Heart right ventricle (tissue), 16 donors: ENCODE measurements at regions of chr11 and their contacts with region 1.

Region 1: GRCh38 chr11:127345819-127346459 is 345.4 kb upstream of the KIRREL3 start:
- DNase-seq: peak in 1 of 2 donors; percentile 14
- ATAC-seq: no peak
- H3K4me3 ChIP-seq: no peak overlapping the region
- H3K27ac ChIP-seq: no peak overlapping the region
- H3K4me1 ChIP-seq: no peaks in the 10 kb centered on the region
- H3K27me3 ChIP-seq: peaks cover 0 to 10% (median 0%) of the 10 kb centered on the region in 7 donors
- CTCF ChIP-seq: peak; percentile 57 to 85 (median 70)

Region 2: DNA sequence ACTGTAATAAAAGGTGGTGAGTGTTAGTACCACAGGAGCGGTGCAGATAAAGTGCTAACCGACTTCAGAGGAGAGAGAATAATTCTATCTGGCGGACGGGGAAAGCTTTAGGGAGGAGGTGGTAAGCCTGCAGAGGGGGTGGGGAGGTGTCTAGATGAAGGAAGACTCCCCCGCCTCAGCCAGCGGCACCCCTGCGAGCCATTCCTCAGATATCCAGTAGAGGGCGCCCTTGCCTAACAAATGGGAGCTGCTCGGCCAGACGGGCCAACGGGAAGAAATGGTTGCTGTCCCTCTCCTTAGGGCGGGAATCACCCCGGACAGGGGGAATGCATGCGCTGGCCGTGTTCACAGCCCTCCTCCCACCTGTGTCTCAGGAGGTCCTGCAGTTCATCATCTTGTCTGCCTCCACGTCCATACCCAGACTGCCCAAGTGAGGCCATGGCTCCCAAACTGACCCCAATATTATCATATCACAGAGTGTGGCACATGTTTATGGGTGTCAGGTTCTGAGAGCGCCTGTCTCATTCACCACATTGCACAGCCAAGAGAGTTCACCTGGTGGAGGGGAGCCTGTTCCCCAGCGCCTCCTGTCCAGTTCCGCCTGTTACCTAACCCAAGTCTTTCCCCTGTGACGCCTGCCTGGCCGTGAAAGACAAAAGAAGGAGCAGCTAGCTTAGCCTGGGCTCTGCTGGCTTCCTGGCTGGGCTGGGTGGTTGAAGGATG is 905.0 kb before region 1 on chr11:
- intact Hi-C with region 1: loop called in 9 of 10 experiments (anchors 1 to 5 kb)
- DNase-seq: peak; percentile 73 to 80
- ATAC-seq: peak; percentile 29 to 77 (median 72)
- H3K4me3 ChIP-seq: no peak overlapping the region
- H3K27ac ChIP-seq: no peak overlapping the region
- H3K4me1 ChIP-seq: peaks cover 4 to 32% (median 16%) of the 10 kb centered on the region in 9 donors
- H3K27me3 ChIP-seq: peaks cover 0 to 8% (median 0%) of the 10 kb centered on the region in 7 donors
- CTCF ChIP-seq: peak; percentile 81 to 98 (median 96)

Region 3: DNA sequence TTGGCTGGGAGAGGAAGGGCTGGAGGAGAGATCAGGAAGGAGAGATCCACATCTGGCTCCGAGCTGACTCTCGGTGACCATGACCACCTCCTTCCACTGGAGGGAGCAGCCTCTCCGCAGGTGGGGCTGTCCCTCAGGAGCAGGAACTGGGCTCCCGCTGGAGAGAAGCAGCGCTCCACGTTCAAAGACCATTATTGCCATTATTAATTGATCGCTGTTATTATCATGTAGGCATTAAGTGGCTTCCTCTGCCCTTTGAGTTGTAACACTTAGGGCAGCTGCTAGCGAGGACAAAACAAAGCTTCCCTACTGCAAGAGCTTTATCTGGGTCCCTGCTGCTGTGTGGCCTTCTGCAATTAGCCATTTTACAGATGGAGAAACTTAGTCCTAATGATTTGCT is 738.6 kb before region 1 on chr11:
- intact Hi-C with region 1: loop called in 5 of 10 experiments (anchors 5 kb)
- DNase-seq: peak; percentile 11 to 31
- ATAC-seq: peak in 7 of 8 donors; percentile 40 to 85 (median 70)
- H3K4me3 ChIP-seq: no peak overlapping the region
- H3K27ac ChIP-seq: no peak overlapping the region
- H3K4me1 ChIP-seq: no peaks in the 10 kb centered on the region
- H3K27me3 ChIP-seq: peaks cover 0 to 67% (median 56%) of the 10 kb centered on the region in 7 donors
- CTCF ChIP-seq: peak in 8 of 9 donors; percentile 47 to 70 (median 64)

Region 4: DNA sequence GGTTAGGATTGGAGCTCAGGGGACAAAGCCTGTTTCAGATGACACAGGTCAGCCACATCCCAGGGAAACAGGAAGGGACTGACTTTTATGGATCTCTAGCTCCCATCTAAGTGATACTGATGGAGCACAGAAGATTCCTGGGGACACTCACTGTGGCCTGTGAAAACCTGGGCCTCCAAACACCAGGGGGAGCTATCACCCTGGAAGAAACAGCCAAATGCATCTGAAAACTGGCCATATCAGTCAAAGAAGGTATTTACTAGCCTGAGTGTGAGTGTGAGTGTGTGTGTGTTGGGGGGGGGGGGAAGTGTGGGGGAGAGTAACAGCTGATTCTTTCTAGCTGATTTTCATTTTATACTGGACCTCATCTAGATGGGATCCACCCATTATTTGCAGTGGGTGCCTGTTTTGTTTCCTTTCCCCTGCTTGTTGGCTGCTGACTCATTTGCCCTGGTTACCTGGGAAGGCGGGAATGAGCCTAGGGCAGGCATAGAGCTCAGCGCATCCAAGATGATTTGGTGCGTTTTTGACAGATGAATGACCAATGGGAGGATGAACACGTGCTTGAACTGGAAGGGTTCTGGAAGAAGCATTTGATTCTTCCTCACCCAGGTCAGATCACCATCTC is 629.4 kb before region 1 on chr11:
- intact Hi-C with region 1: loop called in 1 of 10 experiments (anchors 10 kb)
- DNase-seq: peak in 1 of 2 donors; percentile 17
- ATAC-seq: no peak
- H3K4me3 ChIP-seq: no peak overlapping the region
- H3K27ac ChIP-seq: no peak overlapping the region
- H3K4me1 ChIP-seq: peaks cover 0 to 6% (median 0%) of the 10 kb centered on the region in 9 donors
- H3K27me3 ChIP-seq: peaks cover 0 to 54% (median 26%) of the 10 kb centered on the region in 7 donors
- CTCF ChIP-seq: peak in 7 of 9 donors; percentile 33 to 59 (median 43)

Region 5: DNA sequence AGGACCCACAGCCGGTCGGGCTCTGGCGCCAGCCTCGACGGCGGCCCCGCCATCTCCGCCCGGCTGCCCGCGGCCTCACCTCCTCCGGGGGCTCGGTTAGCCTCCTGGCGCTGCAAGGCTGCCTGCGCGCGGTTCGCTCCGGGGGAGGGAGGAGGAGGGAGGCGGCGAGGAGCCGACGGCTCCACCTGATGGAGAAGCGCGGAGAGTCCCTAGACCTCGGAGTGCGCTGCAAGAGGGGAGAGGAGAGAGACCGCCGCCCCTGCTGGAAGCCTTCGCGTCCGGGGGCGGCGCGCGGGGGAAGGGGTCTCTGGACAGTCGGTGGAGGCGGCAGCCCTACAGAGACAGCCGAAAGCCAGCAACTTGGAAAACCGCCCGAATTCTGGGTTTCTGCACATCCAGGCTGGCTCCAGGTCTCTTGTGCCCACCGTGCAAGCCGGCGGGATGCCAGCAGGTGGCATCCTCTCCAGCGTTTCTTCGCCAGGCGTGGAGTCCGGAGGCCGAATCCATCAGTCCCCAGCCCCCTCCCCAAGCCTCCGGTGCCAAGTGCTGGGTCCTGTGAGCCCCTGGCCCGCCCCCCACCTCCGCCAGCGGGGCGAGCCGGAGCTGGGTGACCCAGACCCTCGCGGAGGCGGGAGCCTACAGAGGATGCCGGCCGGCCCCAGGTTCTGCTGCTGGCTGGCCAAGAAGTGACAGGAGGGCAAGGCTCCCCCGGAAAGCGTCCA is 342.5 kb before region 1 on chr11:
- intact Hi-C with region 1: loop called in 1 of 10 experiments (anchors 5 kb)
- DNase-seq: no peak
- ATAC-seq: peak in 3 of 8 donors; percentile 18 to 59 (median 47)
- H3K4me3 ChIP-seq: peak overlapping the region in 4 of 10 donors; percentile 12 to 29 (median 25)
- H3K27ac ChIP-seq: no peak overlapping the region
- H3K4me1 ChIP-seq: peaks cover 0 to 18% (median 9%) of the 10 kb centered on the region in 9 donors
- H3K27me3 ChIP-seq: peaks cover 13 to 99% (median 79%) of the 10 kb centered on the region in 7 donors
- CTCF ChIP-seq: peak in 3 of 9 donors; percentile 17 to 24 (median 18)